Mammary epithelial cell (primary cell): ENCODE measurements at regions of chr12 and their contacts with region 1.

Region 1: DNA sequence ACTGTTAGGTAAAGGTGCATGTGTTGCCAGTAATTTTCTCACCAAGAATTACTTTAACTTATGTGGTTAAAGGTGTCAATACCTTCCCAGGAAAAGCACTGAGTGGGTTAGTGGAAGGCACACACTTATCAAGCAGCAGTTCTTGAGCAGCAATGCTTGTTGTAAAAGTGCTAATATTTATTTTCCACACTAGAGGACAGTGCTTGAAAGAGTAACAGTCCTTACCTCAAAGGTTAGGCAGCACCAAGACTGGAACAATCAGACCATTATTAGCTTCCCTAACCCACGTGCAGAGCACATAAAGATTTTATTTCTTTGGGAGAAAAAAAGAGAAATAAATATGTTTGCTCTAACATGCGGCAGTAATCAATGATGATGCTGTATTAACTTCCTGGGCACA is 48.8 kb upstream of the KRR1 start:
- DNase-seq: peak; percentile 56
- H3K4me3 ChIP-seq: no peak overlapping the region
- H3K27ac ChIP-seq: no peak overlapping the region
- H3K4me1 ChIP-seq: peaks cover 18% of the 10 kb centered on the region
- H3K27me3 ChIP-seq: no peaks in the 10 kb centered on the region
- CTCF ChIP-seq: peak; percentile 48 to 68

Region 2: GRCh38 chr12:75684678-75685601 is 124.8 kb after region 1 on chr12:
- CTCF ChIA-PET with region 1: no interaction called
- dilution Hi-C with region 1: no loop called
- in situ Hi-C with region 1: no loop called
- intact Hi-C with region 1: loop called (anchors 1 kb)
- DNase-seq: peak; percentile 97
- H3K4me3 ChIP-seq: no peak overlapping the region
- H3K27ac ChIP-seq: peak overlapping the region; percentile 92
- H3K4me1 ChIP-seq: peaks cover 25% of the 10 kb centered on the region
- H3K27me3 ChIP-seq: no peaks in the 10 kb centered on the region
- CTCF ChIP-seq: no peak

Region 3: GRCh38 chr12:75774261-75775052 is 214.3 kb after region 1 on chr12:
- CTCF ChIA-PET with region 1: no interaction called
- dilution Hi-C with region 1: no loop called
- in situ Hi-C with region 1: no loop called
- intact Hi-C with region 1: loop called (anchors 10 kb)
- DNase-seq: no peak
- H3K4me3 ChIP-seq: no peak overlapping the region
- H3K27ac ChIP-seq: no peak overlapping the region
- H3K4me1 ChIP-seq: peaks cover 11% of the 10 kb centered on the region
- H3K27me3 ChIP-seq: no peaks in the 10 kb centered on the region
- CTCF ChIP-seq: no peak

Region 4: DNA sequence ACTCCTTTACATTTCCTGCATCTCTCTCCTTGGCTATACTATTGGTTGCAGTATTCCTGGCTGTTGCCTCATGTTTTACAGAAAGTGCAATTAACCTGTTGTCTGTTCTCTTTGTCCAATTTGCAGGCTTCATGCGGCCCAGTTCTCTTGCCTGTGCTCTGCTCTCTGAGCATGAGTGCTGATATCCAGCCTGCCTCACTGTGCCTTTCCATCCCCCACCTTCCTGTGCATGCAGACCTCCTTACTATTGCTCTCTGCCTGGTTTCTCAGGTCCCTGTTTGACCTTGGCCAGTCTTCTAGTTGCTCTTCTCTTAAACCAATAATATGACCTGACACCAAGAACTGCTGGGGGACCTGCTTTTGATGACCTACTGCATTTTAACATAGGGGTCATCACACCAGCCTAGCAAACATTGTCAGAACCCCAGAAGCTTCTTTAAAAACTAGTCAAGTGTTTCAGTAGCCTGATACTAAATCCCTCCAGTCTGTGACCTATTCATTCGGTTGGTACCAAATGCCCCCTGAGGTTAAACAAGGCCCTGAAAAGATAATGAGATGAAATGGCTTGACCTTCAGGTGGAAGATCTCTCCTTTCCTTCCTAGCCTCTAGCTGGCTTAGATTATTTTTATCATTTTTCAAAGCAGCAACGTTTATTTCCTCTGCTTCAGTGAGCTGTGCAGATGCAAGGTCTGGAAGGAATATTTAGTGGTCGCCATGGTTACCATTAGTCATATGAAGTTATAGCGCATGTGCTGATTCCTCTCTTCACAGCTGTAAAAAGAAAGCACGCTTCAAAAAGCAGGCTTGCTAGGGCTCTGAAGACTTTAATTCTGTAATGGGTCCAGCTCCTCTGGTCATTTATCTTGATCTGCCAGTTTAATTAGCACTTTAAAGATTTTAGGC is 254.9 kb after region 1 on chr12:
- CTCF ChIA-PET with region 1: no interaction called
- dilution Hi-C with region 1: no loop called
- in situ Hi-C with region 1: no loop called
- intact Hi-C with region 1: loop called (anchors 1 kb)
- DNase-seq: peak; percentile 66
- H3K4me3 ChIP-seq: no peak overlapping the region
- H3K27ac ChIP-seq: peak overlapping the region; percentile 60
- H3K4me1 ChIP-seq: peaks cover 23% of the 10 kb centered on the region
- H3K27me3 ChIP-seq: no peaks in the 10 kb centered on the region
- CTCF ChIP-seq: no peak

Region 5: DNA sequence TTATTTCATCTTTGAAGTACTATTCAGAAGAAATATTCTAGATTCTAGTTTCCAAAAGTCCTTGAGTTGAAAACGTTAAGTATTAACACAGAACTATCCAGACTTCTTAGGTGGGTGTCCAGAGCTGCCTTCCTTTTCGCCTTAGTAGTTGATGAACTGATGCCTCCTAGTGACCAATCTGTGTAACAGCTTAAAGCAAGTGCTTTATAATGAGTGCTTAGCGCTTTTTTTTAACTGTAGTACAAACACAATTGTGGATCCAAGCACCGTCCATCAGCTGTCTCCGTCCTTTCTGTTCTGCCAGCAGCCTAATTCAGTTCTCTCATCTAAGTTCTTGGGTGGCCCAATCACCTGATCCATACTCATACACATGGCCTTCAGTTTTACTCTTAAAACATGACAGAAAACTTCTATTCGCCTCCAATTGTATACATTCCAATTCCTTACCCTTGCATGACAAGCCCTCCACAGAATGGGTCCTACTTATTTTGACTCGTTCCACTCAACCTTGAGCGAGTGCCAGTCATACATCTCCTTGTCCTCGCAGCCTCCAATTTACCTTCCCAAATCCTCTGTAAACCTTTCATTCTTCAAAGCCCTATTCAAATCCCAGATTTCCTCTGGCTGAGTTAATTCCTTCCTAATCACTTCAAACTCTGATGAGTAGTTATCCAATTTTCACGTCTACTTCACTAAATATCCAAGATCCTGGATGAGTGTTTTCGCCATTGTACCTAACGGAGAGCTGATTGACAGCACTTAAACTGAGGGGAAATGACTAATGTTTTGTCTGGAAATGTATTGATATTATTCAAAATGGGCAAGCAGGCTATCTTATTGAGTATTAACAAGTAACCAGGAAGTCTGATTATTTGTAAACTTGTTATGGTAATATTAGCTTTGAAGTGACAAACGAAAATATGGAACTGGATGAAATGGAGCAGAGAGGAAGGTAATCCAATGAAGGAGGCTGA is 477.2 kb after region 1 on chr12:
- CTCF ChIA-PET with region 1: no interaction called
- dilution Hi-C with region 1: no loop called
- in situ Hi-C with region 1: no loop called
- intact Hi-C with region 1: loop called (anchors 2 kb)
- DNase-seq: peak; percentile 70
- H3K4me3 ChIP-seq: no peak overlapping the region
- H3K27ac ChIP-seq: no peak overlapping the region
- H3K4me1 ChIP-seq: peaks cover 5% of the 10 kb centered on the region
- H3K27me3 ChIP-seq: no peaks in the 10 kb centered on the region
- CTCF ChIP-seq: peak; percentile 73 to 83